Dorsolateral prefrontal cortex (tissue), 120 donors: ENCODE measurements at regions of chr7 and their contacts with region 1.

Region 1: DNA sequence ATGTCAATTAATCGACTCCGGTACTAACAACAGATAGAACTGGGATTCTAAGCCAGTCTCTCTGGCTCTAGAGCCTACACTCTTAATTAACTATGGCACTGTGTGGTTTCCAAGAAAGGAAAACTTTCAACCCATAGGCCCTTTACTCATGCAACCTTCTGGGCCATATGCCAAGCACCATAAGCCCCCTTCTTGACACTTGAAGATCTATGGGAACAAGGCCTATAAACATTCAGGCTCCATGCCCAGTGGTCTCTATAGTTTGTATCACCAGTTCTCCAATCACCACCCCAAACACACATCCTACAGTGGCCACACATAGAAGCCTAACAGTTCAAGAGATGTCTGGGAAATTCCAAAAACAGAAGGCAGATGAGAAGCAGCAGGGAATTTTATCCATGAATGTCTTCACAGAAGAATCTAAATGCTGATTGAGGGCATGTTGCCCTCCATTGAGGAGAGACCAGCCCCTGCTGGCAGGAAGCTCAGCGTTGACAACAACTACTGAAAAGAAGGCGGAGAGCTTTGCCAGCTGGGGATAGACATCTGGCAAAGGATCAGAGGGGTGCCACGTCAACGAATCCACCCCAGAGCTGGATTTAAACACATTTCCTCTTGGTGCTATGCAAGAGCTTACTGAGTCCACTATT is 64.4 kb downstream of the GRM3 start:
- DNase-seq: peak; percentile 4 to 74 (median 70)
- H3K4me3 ChIP-seq: no peak overlapping the region
- H3K27ac ChIP-seq: peak overlapping the region in 58 of 59 donors; percentile 54 to 93 (median 84)
- H3K27me3 ChIP-seq: no peaks in the 10 kb centered on the region
- CTCF ChIP-seq: peak in 24 of 56 donors; percentile 8 to 45 (median 25)

Region 2: GRCh38 chr7:86643561-86644281 is 64.4 kb before region 1 on chr7 and contains the start of gene GRM3:
- intact Hi-C with region 1: loop called in 1 of 2 experiments (anchors 10 kb)
- DNase-seq: peak; percentile 42 to 92 (median 90)
- H3K4me3 ChIP-seq: peak within 1 kb of the TSS; percentile 58 to 90 (median 75)
- H3K27ac ChIP-seq: peak within 1 kb of the TSS; percentile 76 to 99 (median 96)
- H3K27me3 ChIP-seq: no peaks in the 10 kb centered on the region
- CTCF ChIP-seq: peak in 4 of 56 donors; percentile 3 to 13 (median 7)
- total RNA-seq, gene GRM3: 39.3 to 160 (median 71.7) TPM

Region 3: GRCh38 chr7:86667732-86668131 is 40.4 kb before region 1 on chr7:
- intact Hi-C with region 1: loop called (anchors 5 kb)
- DNase-seq: no peak
- H3K4me3 ChIP-seq: no peak overlapping the region
- H3K27ac ChIP-seq: peak overlapping the region; percentile 60 to 99 (median 97)
- H3K27me3 ChIP-seq: no peaks in the 10 kb centered on the region
- CTCF ChIP-seq: peak in 13 of 56 donors; percentile 9 to 41 (median 25)

Region 4: DNA sequence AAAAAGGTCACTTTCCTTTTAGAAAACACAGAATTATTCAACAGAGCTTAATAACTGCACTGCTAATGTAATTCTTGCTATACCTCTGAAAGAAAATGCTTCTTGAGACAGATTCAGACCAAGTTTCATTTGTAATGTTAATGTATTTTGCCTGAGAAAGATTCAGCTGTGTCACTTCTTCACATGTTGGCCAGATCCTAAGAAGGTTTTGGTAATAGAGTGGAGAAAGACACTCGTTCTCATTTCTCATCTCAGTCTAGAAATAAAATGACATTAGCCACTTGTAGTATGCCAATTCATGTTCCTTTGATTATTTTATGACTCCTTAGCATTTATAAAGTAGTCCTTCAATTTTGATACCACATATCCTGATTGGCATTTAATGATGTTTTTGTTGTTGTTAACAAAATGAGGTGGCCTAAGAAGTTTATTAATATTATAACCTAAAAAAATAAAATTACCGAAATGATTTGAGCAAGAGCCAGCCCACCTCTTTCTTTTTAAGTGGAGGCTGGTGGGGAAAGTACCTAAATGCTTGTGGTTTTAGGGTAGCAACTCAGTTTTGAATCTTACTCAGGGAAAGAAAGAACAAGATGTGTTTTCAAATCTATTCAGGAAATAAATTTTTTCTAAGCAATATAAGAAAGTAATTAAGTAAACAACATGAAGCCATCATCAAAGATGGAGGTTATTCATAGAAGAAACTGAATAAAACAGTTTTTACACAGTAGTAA is 367.7 kb after region 1 on chr7:
- intact Hi-C with region 1: no loop called
- DNase-seq: no peak
- H3K4me3 ChIP-seq: no peak overlapping the region
- H3K27ac ChIP-seq: no peak overlapping the region
- H3K27me3 ChIP-seq: no peaks in the 10 kb centered on the region
- CTCF ChIP-seq: no peak